IMR-90 (cell line): ENCODE measurements at regions of chr1 and their contacts with region 1.

Region 1: DNA sequence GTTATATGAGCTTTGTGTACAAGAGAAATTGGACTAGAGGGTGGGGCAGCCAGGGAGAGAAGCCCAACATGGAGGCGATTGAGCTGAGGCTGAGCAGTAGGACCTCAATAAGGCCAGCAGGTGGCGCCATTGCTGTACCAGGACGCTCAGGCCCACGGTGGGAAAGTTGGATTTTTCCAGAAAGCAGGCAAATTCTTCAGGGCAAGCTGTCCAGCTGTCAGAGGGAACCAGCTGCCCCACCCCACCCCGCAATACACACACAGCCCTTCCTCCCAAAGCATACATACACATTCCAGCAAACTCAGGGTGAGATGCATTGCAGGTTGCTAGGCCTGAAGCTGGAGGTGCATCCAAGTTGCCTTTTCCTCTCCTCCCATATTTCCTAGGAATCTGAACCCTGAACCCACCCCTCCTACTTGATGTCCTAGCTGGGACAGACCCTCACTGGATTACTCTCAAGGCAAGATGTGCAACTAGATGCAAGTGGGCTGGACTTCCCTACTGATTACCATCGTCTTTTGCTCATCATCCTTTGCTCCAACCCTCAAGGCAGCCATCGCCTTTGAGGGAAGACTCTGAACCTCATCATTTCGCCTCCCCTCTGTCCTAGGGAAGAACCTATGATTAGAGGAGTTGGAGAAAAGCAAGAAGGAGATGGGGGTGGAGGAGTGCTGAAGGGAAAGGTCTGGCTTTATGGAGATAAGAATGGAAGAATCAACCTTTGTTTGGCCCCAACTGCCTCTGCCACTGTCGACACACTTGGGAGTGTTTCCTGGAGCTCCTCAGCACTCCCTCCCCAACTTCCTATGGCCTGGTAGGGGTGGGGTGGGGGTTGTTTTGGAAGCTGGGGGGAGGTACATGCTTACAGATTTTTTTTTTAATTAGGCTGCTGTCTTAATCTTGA is 25.5 kb downstream of the CD34 start:
- DNase-seq: peak; percentile 83
- ATAC-seq: peak; percentile 99
- H3K4me3 ChIP-seq: no peak overlapping the region
- H3K27ac ChIP-seq: no peak overlapping the region
- H3K4me1 ChIP-seq: peaks cover 5% of the 10 kb centered on the region
- H3K27me3 ChIP-seq: peaks cover 6% of the 10 kb centered on the region; the same call in 1 of the 2 replicates
- CTCF ChIP-seq: peak; percentile 97
- POLR2A ChIP-seq: no peak
- RAD21 ChIP-seq: peak; percentile 94

Region 2: DNA sequence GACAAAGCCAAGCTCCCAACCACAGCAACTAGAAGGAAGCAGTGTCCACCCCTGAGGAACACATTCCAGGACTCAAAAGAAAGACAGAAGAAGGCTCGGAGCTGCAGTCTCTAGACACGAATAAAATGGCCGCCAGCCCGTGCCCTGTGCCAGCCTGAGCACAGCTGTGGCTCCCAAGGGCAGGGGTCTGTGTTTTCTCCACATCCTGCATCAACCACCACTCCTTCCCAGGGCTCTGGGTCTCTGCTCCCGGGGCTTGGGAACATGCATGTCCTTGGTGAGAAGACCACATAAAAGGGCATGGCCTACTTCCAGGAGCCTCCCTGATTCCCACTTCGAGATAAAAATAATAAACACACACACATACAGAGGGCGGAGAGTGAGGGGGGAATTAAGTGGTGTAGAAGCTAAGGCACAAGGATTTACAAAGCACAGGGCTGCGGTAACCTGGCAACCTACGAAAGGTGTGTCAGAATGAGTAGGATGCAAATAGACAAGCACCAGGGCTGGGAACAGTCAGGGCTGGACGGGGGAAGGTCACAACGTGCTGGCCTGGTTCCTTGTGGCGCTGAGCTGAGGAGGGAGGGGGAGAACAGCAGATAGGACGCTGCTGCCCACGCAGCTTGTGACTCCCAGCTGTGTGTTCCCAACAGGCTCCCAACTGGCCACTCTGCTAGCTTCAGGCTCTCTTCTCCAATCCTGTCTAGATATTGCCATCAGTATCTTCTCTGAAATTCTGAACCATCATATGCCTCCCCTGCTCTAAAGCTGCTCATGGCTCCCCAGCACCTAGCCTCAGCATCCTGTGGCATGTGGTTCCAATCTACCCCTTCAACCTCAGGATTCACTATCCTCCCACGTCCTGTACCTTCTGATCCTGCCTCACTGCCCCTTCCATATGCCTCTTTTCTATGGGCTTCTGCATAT is 47.0 kb before region 1 on chr1:
- CTCF ChIA-PET with region 1: no interaction called
- POLR2A ChIA-PET with region 1: no interaction called
- dilution Hi-C with region 1: no loop called
- in situ Hi-C with region 1: no loop called
- intact Hi-C with region 1: no loop called
- DNase-seq: no peak
- ATAC-seq: no peak
- H3K4me3 ChIP-seq: no peak overlapping the region
- H3K27ac ChIP-seq: no peak overlapping the region
- H3K4me1 ChIP-seq: no peaks in the 10 kb centered on the region; the same call in 1 of the 2 replicates
- H3K27me3 ChIP-seq: no peaks in the 10 kb centered on the region
- CTCF ChIP-seq: no peak
- POLR2A ChIP-seq: no peak
- RAD21 ChIP-seq: no peak

Region 3: DNA sequence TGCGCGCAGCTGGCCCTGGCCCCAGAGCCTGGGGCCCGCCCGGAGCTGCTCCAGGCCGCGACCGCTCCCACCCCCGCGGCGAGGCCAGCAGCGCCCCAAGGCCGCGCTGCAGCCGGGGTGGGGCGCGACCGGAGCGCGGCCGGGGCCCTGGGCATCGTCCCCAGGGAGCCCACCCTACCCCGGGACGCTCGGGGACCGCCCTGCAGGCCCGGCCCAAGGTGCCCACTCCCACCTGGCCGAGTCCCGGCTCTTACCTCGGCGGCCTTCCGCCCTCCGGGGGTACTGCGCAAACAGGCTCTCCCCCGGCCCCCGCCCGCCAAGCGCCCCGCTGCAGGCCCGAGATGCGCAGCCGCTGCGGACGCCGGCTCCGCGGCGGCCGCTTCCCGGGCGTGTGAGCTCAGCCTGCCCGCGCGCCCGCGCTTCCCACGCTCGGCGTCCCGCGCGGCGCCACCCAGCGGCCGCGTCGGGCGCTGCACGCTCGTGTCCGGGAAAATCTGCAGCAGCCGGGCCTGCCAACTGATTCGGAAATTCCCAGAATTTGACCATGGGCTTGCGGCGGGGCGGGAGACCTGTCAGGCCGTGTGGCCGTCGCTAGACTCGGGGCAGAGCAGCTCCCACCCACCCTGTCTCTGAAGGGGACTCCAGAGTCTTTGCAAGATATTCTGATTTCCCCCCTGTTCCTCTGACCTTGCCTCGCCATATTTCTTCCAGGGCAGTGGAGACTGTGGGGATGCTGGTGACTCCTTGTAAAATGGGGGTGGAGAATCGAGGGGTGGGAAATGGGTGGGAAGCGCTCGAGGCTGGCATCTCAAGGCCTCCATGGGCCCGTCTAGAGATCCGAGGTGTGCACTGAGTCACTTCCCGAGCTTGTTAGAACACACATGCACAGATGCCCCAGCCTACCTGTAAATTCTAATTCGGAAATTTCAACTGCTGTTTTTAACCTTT is 16.3 kb before region 1 on chr1:
- CTCF ChIA-PET with region 1: interaction called, 15 read pairs
- POLR2A ChIA-PET with region 1: no interaction called
- dilution Hi-C with region 1: no loop called
- in situ Hi-C with region 1: no loop called
- intact Hi-C with region 1: no loop called
- DNase-seq: peak; percentile 62
- ATAC-seq: peak; percentile 92
- H3K4me3 ChIP-seq: peak overlapping the region; percentile 59
- H3K27ac ChIP-seq: no peak overlapping the region
- H3K4me1 ChIP-seq: peaks cover 12% of the 10 kb centered on the region
- H3K27me3 ChIP-seq: peaks cover 4% of the 10 kb centered on the region
- CTCF ChIP-seq: peak; percentile 96
- POLR2A ChIP-seq: no peak
- RAD21 ChIP-seq: peak; percentile 64

Region 4: GRCh38 chr1:207963427-207964194 is 78.2 kb after region 1 on chr1:
- CTCF ChIA-PET with region 1: interaction called, 69 read pairs
- POLR2A ChIA-PET with region 1: interaction called, 10 read pairs
- dilution Hi-C with region 1: no loop called
- in situ Hi-C with region 1: loop called (anchors 5 kb)
- intact Hi-C with region 1: loop called (anchors 1 kb)
- DNase-seq: peak; percentile 75
- ATAC-seq: peak; percentile 91
- H3K4me3 ChIP-seq: peak overlapping the region; percentile 45
- H3K27ac ChIP-seq: peak overlapping the region; percentile 66
- H3K4me1 ChIP-seq: peaks cover 3% of the 10 kb centered on the region
- H3K27me3 ChIP-seq: peaks cover 3% of the 10 kb centered on the region; the same call in 1 of the 2 replicates
- CTCF ChIP-seq: peak; percentile 100
- POLR2A ChIP-seq: peak; percentile 34
- RAD21 ChIP-seq: peak; percentile 98

Region 5: DNA sequence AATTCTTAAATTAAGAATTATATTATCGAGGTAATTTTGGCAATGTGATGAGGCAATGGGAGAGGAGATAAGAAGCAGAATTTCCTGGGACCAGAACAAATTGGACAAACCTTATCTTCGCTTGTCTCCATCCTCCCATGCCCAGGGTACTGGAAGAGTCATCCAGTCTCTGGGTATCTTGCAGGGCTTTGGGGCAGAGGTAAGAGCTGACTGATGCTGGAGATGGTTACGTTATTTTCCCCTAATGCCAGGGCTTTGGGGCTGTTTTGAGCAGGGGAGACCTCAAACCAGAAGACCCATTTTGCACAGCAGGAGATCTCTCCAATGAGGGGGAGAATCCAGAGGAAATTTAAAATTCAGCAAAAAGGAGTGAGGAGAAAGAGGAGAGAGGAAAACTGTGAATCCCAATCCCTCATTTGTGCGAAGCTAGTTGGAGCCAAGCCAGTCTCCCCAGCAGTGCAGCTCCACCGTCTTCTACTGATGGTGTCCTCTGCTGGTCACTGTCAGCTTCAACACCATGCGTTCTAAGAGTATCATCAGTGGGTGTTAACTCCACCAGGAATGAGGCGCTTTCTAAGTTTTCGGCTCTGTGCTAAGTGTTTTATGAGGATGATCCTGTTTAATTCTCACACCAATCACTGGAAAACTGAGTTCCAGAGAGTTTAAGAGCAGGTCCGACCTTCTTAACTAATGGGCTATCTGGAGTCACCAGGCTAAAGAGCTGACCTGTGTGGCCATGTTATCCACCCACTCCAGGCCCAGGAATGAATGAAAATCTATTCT is 112.3 kb after region 1 on chr1:
- CTCF ChIA-PET with region 1: interaction called, 26 read pairs
- POLR2A ChIA-PET with region 1: no interaction called
- dilution Hi-C with region 1: no loop called
- in situ Hi-C with region 1: no loop called
- intact Hi-C with region 1: loop called (anchors 1 kb)
- DNase-seq: peak; percentile 68
- ATAC-seq: peak; percentile 92
- H3K4me3 ChIP-seq: no peak overlapping the region
- H3K27ac ChIP-seq: no peak overlapping the region
- H3K4me1 ChIP-seq: no peaks in the 10 kb centered on the region
- H3K27me3 ChIP-seq: peaks cover 14% of the 10 kb centered on the region
- CTCF ChIP-seq: peak; percentile 70
- POLR2A ChIP-seq: no peak
- RAD21 ChIP-seq: peak; percentile 52

Region 6: DNA sequence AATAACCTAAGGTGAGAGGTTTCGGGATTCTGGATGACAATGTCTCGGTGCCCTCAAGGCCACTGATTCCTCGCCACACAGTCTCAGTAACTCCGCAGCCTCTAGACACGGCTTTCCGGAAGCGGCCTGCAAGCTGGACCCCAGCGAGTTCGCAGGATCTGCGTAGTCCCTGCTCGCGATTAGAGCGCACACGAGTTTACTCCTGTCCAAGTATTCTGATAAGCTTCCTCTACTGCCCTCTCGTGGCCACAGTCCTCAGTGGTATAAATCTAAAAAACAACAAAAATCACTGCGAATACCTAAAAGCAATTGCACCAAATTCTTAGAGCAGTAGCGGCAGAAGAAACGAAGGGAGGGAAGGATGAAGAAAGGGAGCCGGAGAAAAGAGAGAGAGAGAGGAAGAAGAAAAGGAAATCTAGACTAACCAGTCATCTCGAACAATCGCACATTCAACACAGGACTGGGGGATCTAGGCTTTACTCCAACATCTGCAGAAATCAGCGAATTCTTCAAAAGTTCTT is 359.9 kb after region 1 on chr1:
- CTCF ChIA-PET with region 1: interaction called, 3 read pairs
- POLR2A ChIA-PET with region 1: no interaction called
- dilution Hi-C with region 1: no loop called
- in situ Hi-C with region 1: loop called (anchors 5 kb)
- intact Hi-C with region 1: loop called (anchors 5 kb)
- DNase-seq: peak; percentile 92
- ATAC-seq: peak; percentile 77
- H3K4me3 ChIP-seq: peak overlapping the region; percentile 7; the same call in 1 of the 2 replicates
- H3K27ac ChIP-seq: no peak overlapping the region
- H3K4me1 ChIP-seq: peaks cover 5% of the 10 kb centered on the region; the same call in 1 of the 2 replicates
- H3K27me3 ChIP-seq: peaks cover 19% of the 10 kb centered on the region
- CTCF ChIP-seq: peak; percentile 87
- POLR2A ChIP-seq: no peak
- RAD21 ChIP-seq: peak; percentile 82